ENCODE measurements at regions of chr12 and their contacts with region 1.

Region 1: DNA sequence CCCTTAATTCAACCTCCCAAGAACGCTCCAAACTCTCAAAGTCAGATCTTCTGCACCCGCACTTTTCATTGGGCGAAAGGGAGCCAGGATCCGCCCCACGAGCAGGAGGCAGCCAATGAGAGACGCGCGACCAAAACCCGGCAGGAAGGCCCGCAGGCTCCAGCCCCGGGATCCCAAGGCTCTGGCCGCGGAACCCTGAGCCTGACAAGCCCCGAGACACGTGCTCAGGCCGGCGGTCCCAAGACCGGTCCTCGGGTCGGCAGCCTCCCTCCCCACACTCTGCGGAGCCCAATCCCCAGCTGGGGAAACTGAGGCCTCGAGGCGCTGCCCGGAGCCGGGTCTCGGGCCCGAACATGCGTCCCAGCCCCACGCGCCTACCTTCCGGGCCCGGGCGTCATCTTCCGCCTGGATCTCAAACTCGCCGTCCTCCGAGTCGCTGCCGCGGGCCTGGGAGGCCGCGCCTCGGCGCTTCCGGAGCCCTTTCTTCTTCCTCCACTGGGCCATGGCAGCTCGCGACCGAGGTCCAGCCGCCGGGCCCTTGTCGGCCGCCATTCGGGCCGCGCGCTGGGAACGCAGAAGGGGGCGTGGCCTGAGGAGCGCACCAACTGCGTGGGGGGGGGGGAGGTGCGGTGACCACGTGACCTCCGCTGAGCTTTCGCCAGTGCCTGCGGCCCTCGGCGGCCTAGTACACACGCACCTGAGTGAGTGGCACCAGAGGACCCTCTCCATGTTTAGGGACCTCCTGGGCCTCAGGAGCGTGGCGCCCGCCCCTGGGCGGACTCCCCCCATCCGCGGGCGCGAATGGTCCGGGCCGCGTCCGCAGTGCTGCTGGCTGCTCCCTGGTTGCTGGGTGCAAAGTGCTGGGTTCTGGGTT is at the starts of genes DDX54 and RITA1:
- DNase-seq: peak; percentile 90 to 93
- ATAC-seq: peak; percentile 94
- H3K4me3 ChIP-seq: peak within 1 kb of the TSS; percentile 89
- H3K27ac ChIP-seq: peak within 1 kb of the TSS; percentile 96 to 98
- H3K4me1 ChIP-seq: peaks cover 20% of the 10 kb centered on the region
- CTCF ChIP-seq: no peak
- EP300 ChIP-seq: no peak
- POLR2A ChIP-seq: peak; percentile 78; the same call in 1 of the 2 replicates
- RAD21 ChIP-seq: no peak
- polyA plus RNA-seq, gene DDX54: 60.6 and 62.4 TPM in 2 replicates
- polyA plus RNA-seq, gene RITA1: 16.7 and 18.6 TPM in 2 replicates

Region 2: DNA sequence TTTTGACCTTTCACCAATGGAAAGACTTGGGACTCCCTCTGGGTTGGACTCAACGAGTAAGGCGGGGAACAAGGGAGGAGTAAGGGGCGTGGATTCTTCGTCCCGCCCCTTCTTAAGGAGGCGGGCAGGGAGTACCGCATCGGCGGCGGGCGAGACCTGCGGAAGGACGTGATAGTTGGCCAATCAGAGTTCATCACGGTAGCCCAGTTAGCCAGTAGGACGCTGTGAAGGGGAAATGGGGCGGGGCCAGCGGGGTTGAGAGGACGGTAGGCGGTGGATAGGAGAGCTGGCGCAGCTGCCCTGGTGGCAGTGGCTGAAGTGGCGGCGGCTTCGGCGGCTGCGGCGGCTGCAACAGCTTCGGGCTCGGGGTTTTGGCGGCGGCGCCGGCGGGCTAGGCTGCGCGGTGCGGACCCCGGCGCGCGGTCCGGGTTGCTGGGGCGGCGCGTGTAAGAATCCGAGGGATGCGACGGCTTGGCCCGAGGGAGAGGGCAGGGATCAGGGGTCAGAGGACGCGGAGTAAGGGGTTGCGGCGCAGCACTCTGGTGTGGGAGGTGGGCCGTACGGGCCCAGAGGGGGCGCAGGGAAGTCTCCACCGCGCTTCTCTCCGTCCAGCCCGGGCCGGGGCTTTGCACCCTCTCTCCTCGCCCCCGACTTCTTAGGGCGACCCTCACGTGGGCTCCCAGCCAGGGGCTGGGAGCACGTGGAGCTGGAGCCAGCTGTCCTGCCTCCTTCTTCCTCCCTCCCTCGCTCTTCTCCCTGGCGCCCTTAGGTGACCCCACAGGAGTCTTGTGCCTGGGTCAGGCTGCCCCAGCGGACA is 36.3 kb after region 1 on chr12 and contains the start of gene TPCN1:
- CTCF ChIA-PET with region 1: no interaction called
- POLR2A ChIA-PET with region 1: interaction called, 11 read pairs
- DNase-seq: peak; percentile 98 to 100
- ATAC-seq: peak; percentile 93 to 96
- H3K4me3 ChIP-seq: peak within 1 kb of the TSS; percentile 67
- H3K27ac ChIP-seq: peak within 1 kb of the TSS; percentile 80 to 93
- H3K4me1 ChIP-seq: peaks cover 20% of the 10 kb centered on the region
- CTCF ChIP-seq: no peak
- EP300 ChIP-seq: no peak
- POLR2A ChIP-seq: peak; percentile 98
- RAD21 ChIP-seq: no peak
- polyA plus RNA-seq, gene TPCN1: 24.1 and 28.7 TPM in 2 replicates